ENCODE measurements at regions of chr13 and their contacts with region 1.

Region 1: DNA sequence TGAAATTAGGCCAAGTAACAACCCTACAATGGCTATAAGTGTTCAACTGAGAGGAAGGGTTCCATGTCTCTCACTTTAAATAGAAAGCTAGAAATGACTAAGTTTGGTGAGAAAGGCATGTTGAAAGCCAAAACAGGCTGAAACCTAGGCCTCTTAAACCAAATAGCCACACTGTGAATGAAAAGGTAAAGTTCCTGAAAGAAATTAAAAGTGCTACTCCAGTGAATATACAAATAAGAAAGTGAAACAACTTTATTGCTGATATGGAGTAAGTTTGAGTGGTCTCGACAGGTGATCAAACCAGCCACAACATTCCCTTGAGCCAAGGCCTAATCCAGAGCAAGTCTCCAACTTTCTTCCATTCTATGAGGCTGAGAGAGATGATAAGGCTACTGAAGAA is 209.6 kb downstream of the KLF12 start:
- DNase-seq: no peak
- H3K4me3 ChIP-seq: no peak overlapping the region
- H3K4me3 Mint-ChIP-seq: peak overlapping the region in 7 of 8 donors; percentile 15 to 78 (median 62)
- H3K27ac ChIP-seq: no peak overlapping the region
- H3K27ac Mint-ChIP-seq: peak overlapping the region in 5 of 7 donors; percentile 36 to 77 (median 48)
- H3K4me1 ChIP-seq: peaks cover 60% of the 10 kb centered on the region
- H3K4me1 Mint-ChIP-seq: peaks cover 62 to 94% (median 77%) of the 10 kb centered on the region in 4 donors
- H3K27me3 ChIP-seq: no peaks in the 10 kb centered on the region
- H3K27me3 Mint-ChIP-seq: no peaks in the 10 kb centered on the region

Region 2: GRCh38 chr13:73894995-73895571 is 29.5 kb before region 1 on chr13:
- CTCF ChIA-PET with region 1: no interaction called
- POLR2A ChIA-PET with region 1: no interaction called
- intact Hi-C with region 1: loop called (anchors 5 kb)
- DNase-seq: peak in 1 of 5 donors; percentile 14
- H3K4me3 ChIP-seq: no peak overlapping the region
- H3K4me3 Mint-ChIP-seq: peak overlapping the region in 3 of 8 donors; percentile 5 to 62 (median 25)
- H3K27ac ChIP-seq: no peak overlapping the region
- H3K27ac Mint-ChIP-seq: peak overlapping the region in 4 of 7 donors; percentile 57 to 91 (median 70)
- H3K4me1 ChIP-seq: peaks cover 33% of the 10 kb centered on the region
- H3K4me1 Mint-ChIP-seq: peaks cover 44 to 59% (median 47%) of the 10 kb centered on the region in 4 donors
- H3K27me3 ChIP-seq: no peaks in the 10 kb centered on the region
- H3K27me3 Mint-ChIP-seq: no peaks in the 10 kb centered on the region

Region 3: GRCh38 chr13:73998631-73999030 is 74.0 kb after region 1 on chr13:
- CTCF ChIA-PET with region 1: no interaction called
- POLR2A ChIA-PET with region 1: no interaction called
- intact Hi-C with region 1: no loop called
- DNase-seq: no peak
- H3K4me3 ChIP-seq: no peak overlapping the region
- H3K4me3 Mint-ChIP-seq: peak overlapping the region in 3 of 8 donors; percentile 17 to 66 (median 26)
- H3K27ac ChIP-seq: no peak overlapping the region
- H3K27ac Mint-ChIP-seq: peak overlapping the region in 3 of 7 donors; percentile 65 to 67 (median 66)
- H3K4me1 ChIP-seq: peaks cover 33% of the 10 kb centered on the region
- H3K4me1 Mint-ChIP-seq: peaks cover 52 to 86% (median 70%) of the 10 kb centered on the region in 4 donors
- H3K27me3 ChIP-seq: no peaks in the 10 kb centered on the region
- H3K27me3 Mint-ChIP-seq: no peaks in the 10 kb centered on the region

Region 4: DNA sequence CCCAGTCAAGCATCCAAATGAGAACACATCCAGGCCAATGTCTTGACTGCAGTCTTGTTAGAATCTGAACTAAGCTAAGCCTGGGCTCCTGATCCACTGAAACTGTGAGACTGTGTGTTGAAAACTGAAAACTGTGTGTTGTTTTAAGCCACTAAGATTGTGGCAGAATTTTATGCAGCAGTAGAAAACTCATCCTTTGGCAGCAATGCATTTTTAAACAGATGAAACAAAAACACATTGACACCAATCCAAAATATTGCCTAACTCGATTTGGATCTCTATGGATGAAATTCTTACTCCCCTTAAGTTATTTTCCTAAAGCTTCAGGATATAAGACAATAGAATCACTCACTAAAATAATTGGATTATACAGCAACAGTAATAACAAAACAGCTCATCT is 411.9 kb after region 1 on chr13:
- CTCF ChIA-PET with region 1: no interaction called
- POLR2A ChIA-PET with region 1: no interaction called
- intact Hi-C with region 1: no loop called
- DNase-seq: no peak
- H3K4me3 ChIP-seq: no peak overlapping the region
- H3K4me3 Mint-ChIP-seq: no peak overlapping the region
- H3K27ac ChIP-seq: no peak overlapping the region
- H3K27ac Mint-ChIP-seq: no peak overlapping the region
- H3K4me1 ChIP-seq: no peaks in the 10 kb centered on the region
- H3K4me1 Mint-ChIP-seq: no peaks in the 10 kb centered on the region
- H3K27me3 ChIP-seq: no peaks in the 10 kb centered on the region
- H3K27me3 Mint-ChIP-seq: no peaks in the 10 kb centered on the region

Measured in CD4-positive, alpha-beta memory T cell (primary cell).